ENCODE measurements at regions of chr9 and their contacts with region 1.

Region 1: GRCh38 chr9:91036826-91037510 is 235.3 kb downstream of the SYK start:
- DNase-seq: peak; percentile 44 to 80
- H3K4me3 ChIP-seq: no peak overlapping the region
- H3K27ac ChIP-seq: no peak overlapping the region
- H3K4me1 ChIP-seq: peaks cover 0 to 2% (median 0%) of the 10 kb centered on the region in 4 experiments; a peak in 1 of 7 replicates
- H3K27me3 ChIP-seq: no peaks in the 10 kb centered on the region
- CTCF ChIP-seq: peak; percentile 66 to 72 (median 72)
- EP300 ChIP-seq: no peak
- POLR2A ChIP-seq: no peak
- RAD21 ChIP-seq: peak; percentile 87 to 88

Region 2: DNA sequence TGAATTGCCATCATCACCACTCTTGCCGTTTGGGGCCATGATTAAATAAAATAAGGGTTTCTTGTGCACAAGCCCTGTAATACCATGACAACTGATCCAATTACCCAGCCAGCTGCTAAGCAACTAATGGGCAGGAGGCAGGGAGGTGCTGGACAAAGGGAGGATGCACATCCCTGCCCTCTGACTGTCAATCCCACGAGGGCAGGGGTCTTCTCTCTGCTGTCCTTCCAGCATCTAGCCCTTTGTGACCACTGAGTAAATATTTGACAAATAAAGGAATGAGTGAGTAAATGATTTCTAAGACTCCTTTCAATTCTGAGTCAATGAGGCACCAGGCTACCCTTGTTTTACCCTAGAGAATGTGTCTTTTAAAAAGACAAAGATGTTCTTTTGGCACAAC is 11.8 kb after region 1 on chr9:
- CTCF ChIA-PET with region 1: interaction called, 23 read pairs
- POLR2A ChIA-PET with region 1: no interaction called
- DNase-seq: peak in 1 of 2 experiments; percentile 23
- H3K4me3 ChIP-seq: no peak overlapping the region
- H3K27ac ChIP-seq: no peak overlapping the region
- H3K4me1 ChIP-seq: 0 out of 7 replicates have a peak, but pooled peaks cover 0 to 3% (median 0%) of the 10 kb centered on the region in 4 experiments
- H3K27me3 ChIP-seq: no peaks in the 10 kb centered on the region
- CTCF ChIP-seq: no peak
- EP300 ChIP-seq: no peak
- POLR2A ChIP-seq: no peak
- RAD21 ChIP-seq: no peak

Region 3: GRCh38 chr9:91117959-91118703 is 81.2 kb after region 1 on chr9:
- CTCF ChIA-PET with region 1: no interaction called
- POLR2A ChIA-PET with region 1: no interaction called
- DNase-seq: peak; percentile 23 to 74
- H3K4me3 ChIP-seq: peak overlapping the region in 1 of 4 experiments; percentile 31; a peak in 1 of 8 replicates
- H3K27ac ChIP-seq: no peak overlapping the region
- H3K4me1 ChIP-seq: peaks cover 4 to 6% (median 5%) of the 10 kb centered on the region in 4 experiments; a peak in 6 of 7 replicates
- H3K27me3 ChIP-seq: no peaks in the 10 kb centered on the region; a peak in 2 of 7 replicates
- CTCF ChIP-seq: no peak
- EP300 ChIP-seq: no peak
- POLR2A ChIP-seq: no peak
- RAD21 ChIP-seq: no peak

Region 4: GRCh38 chr9:91422758-91423711 is 386.1 kb after region 1 on chr9:
- CTCF ChIA-PET with region 1: interaction called, 45 read pairs
- POLR2A ChIA-PET with region 1: interaction called, 4 read pairs
- DNase-seq: peak in 1 of 2 experiments; percentile 72
- H3K4me3 ChIP-seq: peak overlapping the region; percentile 58 to 97 (median 82)
- H3K27ac ChIP-seq: 0 out of 2 replicates have a peak overlapping the region, but pooled peaks have one; percentile 33
- H3K4me1 ChIP-seq: peaks cover 2 to 9% (median 4%) of the 10 kb centered on the region in 4 experiments; a peak in 4 of 7 replicates
- H3K27me3 ChIP-seq: peaks cover 2 to 45% (median 30%) of the 10 kb centered on the region in 4 experiments
- CTCF ChIP-seq: peak in 2 of 3 experiments; percentile 24 to 34; a peak in 2 of 4 replicates
- EP300 ChIP-seq: no peak
- POLR2A ChIP-seq: no peak
- RAD21 ChIP-seq: peak in 1 of 2 experiments; percentile 5; a peak in 1 of 4 replicates